WTC11 (cell line): ENCODE measurements at regions of chr1 and their contacts with region 1.

Region 1: DNA sequence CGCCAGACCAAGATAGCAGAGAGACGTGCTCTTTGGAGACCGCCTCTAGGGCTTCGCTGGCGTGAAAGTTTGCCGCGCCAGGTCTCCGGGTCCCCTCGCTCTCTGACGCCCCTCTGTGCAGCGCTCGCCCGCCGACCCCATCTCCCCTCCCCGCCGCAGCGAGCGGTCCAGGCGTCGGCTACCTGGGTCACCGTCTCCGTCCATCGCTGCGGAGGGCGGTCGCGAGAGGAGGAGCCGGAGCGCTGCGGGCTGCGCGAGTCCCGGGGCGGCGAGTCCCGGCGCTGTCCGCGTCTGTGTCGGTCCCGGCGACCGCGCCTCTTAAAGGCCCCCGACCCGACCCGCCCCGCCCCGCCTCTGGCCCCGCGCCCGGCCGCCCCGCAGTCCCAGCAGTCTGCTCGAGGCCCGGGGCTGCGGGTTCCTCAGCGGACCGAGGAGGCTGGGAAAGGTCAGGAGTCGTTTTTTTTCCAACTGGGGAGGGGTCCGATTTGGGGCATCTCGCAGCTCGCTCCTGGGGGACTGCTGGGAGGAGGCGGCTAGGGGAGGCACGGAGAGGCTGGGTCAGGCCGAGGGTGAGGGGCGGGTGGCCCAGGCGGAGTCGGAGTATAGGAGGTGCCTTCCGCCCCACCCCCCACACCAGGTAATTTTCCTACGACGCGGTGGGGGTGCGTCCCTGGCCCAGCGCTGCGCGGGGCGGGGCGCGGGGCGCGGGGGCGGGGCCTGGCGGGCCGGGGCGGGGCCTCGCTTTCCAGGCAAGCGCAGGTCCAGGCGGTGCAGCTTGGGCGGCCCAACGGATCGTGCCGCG is at the starts of genes FBXO2 and FBXO44:
- DNase-seq: peak; percentile 88
- ATAC-seq: peak; percentile 69
- H3K4me3 Mint-ChIP-seq: peak within 1 kb of the TSS; percentile 74
- H3K27ac Mint-ChIP-seq: no peak within 1 kb of the TSS
- H3K4me1 Mint-ChIP-seq: peaks cover 33% of the 10 kb centered on the region
- H3K27me3 Mint-ChIP-seq: peaks cover 22% of the 10 kb centered on the region
- CTCF ChIP-seq: no peak
- total RNA-seq, gene FBXO2: 58.2 to 68.2 TPM (median 63.7 TPM) in 3 replicates
- total RNA-seq, gene FBXO44: 34.9 to 45.6 TPM (median 40.6 TPM) in 3 replicates

Region 2: GRCh38 chr1:11761988-11762406 is 107.7 kb after region 1 on chr1 and contains the start of gene C1orf167:
- CTCF ChIA-PET with region 1: interaction called, 10 read pairs
- POLR2A ChIA-PET with region 1: no interaction called
- DNase-seq: peak; percentile 73
- ATAC-seq: peak; percentile 87
- H3K4me3 Mint-ChIP-seq: peak within 1 kb of the TSS; percentile 56
- H3K27ac Mint-ChIP-seq: no peak within 1 kb of the TSS
- H3K4me1 Mint-ChIP-seq: peaks cover 10% of the 10 kb centered on the region
- H3K27me3 Mint-ChIP-seq: peaks cover 59% of the 10 kb centered on the region
- CTCF ChIP-seq: no peak
- total RNA-seq, gene C1orf167: 1.2 to 3.1 TPM (median 2.8 TPM) in 3 replicates

Region 3: DNA sequence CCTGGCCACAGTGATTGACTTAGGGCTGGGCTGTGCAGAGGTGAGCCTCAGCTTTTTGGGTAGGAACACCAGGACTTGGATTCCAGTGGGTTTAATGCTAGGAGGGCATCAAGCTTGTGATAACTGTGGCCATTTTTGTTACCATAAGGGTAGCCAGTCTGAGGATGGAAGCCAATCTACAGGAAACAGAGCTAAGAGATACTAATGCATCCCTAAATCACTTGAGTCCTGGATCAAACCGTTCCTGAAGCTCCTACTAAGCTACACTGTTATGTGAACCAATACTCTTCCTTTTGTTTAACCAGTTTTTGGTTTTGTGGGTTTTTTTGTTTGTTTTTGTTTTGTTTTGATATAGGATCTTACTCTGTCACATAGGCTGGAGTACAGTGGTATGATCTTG is 259.7 kb after region 1 on chr1:
- CTCF ChIA-PET with region 1: no interaction called
- POLR2A ChIA-PET with region 1: no interaction called
- DNase-seq: no peak
- ATAC-seq: no peak
- H3K4me3 Mint-ChIP-seq: no peak overlapping the region
- H3K27ac Mint-ChIP-seq: 0 out of 2 replicates have a peak overlapping the region, but pooled peaks have one; percentile 70
- H3K4me1 Mint-ChIP-seq: peaks cover 12% of the 10 kb centered on the region
- H3K27me3 Mint-ChIP-seq: no peaks in the 10 kb centered on the region
- CTCF ChIP-seq: no peak